HAP-1 (cell line): ENCODE measurements at regions of chr10 and their contacts with region 1.

Region 1: DNA sequence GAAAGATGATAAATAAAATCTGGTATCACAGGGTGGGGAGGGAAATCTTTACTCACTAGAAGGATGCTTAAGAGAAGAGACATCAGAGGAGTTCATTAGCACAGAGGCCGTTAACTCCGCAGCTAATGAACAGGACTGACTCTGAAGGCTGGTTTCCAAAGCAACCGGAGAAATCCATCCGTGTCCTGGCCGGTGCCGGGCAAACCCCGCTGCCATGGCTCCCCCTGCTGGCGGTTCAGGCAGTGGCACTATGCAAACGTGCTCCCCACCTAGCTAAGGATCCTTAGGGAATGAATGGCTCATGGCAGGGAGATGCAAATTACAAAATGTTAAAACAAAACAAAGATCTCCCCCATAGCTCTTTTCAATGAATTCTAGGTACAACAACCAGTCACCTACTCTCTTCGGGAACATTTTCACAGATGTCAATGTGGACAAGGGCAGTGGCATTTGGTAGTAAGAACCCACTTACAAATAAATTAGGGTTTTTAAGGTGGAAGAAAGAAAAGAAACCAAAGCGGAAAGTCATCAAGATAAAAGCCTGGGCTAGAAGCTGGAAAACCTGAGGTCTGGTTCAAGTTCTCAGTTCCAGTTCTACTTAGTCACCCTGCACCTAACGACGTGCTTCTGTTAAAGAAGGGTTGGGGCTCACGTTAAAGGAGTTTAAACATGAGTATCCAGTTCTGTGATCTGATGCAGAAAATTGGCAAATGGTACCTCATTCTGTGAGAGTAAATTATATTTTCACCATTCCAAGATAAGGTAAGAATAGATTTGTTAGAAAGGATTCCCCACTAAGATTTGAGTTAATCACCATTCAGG is 138.2 kb downstream of the SVIL start:
- DNase-seq: peak; percentile 40 to 88
- H3K4me3 ChIP-seq: no peak overlapping the region
- H3K4me1 ChIP-seq: no peaks in the 10 kb centered on the region
- H3K27me3 ChIP-seq: no peaks in the 10 kb centered on the region

Region 2: GRCh38 chr10:28644647-28645046 is 851.9 kb before region 1 on chr10:
- in situ Hi-C with region 1: no loop called
- DNase-seq: no peak
- H3K4me3 ChIP-seq: no peak overlapping the region
- H3K4me1 ChIP-seq: no peaks in the 10 kb centered on the region
- H3K27me3 ChIP-seq: no peaks in the 10 kb centered on the region

Region 3: DNA sequence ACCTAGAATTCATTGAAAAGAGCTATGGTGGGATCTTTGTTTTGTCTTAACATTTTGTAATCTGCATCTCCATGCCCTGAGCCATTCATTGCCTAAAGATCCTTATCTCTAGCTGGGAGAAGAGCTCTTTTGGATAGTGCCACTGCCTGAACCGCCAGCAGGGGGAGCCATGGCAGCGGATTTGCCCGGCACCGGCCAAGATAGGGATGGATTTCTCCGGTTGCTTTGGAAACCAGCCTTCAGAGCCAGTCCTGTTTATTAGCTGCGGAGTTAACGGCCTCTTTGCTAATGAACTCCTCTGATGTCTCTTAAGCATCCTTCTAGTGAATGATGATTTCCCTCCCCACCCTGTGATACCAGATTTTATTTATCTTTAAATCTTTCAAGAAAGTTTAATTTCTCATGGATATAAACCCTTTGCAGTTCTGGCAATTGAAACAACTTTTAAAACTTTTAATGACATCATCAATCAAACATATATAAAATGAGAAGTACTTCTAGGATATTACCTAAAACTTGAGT is 1191.2 kb after region 1 on chr10:
- in situ Hi-C with region 1: loop called (anchors 5 kb)
- DNase-seq: peak; percentile 74 to 89
- H3K4me3 ChIP-seq: no peak overlapping the region
- H3K4me1 ChIP-seq: no peaks in the 10 kb centered on the region; the same call in 1 of the 2 replicates
- H3K27me3 ChIP-seq: 0 out of 2 replicates have a peak, but pooled peaks cover 4% of the 10 kb centered on the region